ENCODE measurements at regions of chr1 and their contacts with region 1.

Region 1: GRCh38 chr1:105100102-105100501 is 1350.4 kb downstream of the AMY1C start:
- DNase-seq: no peak
- H3K4me3 ChIP-seq: no peak overlapping the region
- H3K27ac ChIP-seq: no peak overlapping the region
- H3K4me1 ChIP-seq: no peaks in the 10 kb centered on the region
- H3K27me3 ChIP-seq: no peaks in the 10 kb centered on the region
- CTCF ChIP-seq: no peak
- EP300 ChIP-seq: no peak
- POLR2A ChIP-seq: no peak

Region 2: GRCh38 chr1:104973516-104973915 is 126.6 kb before region 1 on chr1:
- intact Hi-C with region 1: loop called in 1 of 4 experiments (anchors 10 kb)
- DNase-seq: no peak
- H3K4me3 ChIP-seq: no peak overlapping the region
- H3K27ac ChIP-seq: no peak overlapping the region
- H3K4me1 ChIP-seq: no peaks in the 10 kb centered on the region
- H3K27me3 ChIP-seq: peaks cover 2% of the 10 kb centered on the region
- CTCF ChIP-seq: no peak
- EP300 ChIP-seq: no peak
- POLR2A ChIP-seq: no peak

Region 3: GRCh38 chr1:105122041-105122440 is 21.9 kb after region 1 on chr1:
- intact Hi-C with region 1: no loop called
- DNase-seq: no peak
- H3K4me3 ChIP-seq: no peak overlapping the region
- H3K27ac ChIP-seq: no peak overlapping the region
- H3K4me1 ChIP-seq: no peaks in the 10 kb centered on the region
- H3K27me3 ChIP-seq: no peaks in the 10 kb centered on the region
- CTCF ChIP-seq: no peak
- EP300 ChIP-seq: no peak
- POLR2A ChIP-seq: no peak

Measured in ovary (tissue), 10 donors.